ENCODE measurements at regions of chr14 and their contacts with region 1.

Region 1: DNA sequence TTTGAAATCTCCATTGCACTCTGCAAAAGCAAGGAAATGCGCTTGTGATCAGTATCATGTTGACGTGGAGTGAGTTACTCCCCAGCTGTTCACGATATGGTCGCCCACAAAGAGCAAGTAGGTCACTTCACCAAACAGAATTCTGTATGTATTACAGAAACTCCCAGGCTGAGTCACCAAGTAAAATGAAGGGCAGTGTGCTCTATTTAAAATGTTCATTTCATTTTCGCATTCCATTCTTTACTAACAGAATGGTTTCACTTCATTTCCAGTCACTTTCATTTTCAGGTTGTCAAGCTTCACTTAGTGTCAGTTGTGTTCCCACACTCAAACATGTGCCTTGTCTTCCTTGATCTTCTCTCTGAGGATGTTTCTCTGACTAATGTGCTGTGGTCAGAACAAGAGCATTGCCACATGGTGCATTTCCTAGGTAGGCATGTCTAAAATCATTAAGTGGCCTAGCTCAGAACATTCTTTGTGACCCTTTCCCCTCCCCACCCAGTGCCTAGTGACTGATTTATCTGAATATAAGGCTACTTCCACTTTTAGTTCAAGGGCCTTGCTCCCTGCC is 391.2 kb downstream of the RAD51B start:
- DNase-seq: peak; percentile 74
- H3K4me3 Mint-ChIP-seq: peak overlapping the region; percentile 11
- H3K27ac Mint-ChIP-seq: peak overlapping the region; percentile 57
- H3K4me1 Mint-ChIP-seq: peaks cover 48% of the 10 kb centered on the region
- H3K27me3 Mint-ChIP-seq: no peaks in the 10 kb centered on the region

Region 2: GRCh38 chr14:68148276-68148675 is 62.5 kb before region 1 on chr14:
- CTCF ChIA-PET with region 1: no interaction called
- intact Hi-C with region 1: loop called (anchors 2 kb)
- DNase-seq: peak; percentile 40
- H3K4me3 Mint-ChIP-seq: no peak overlapping the region
- H3K27ac Mint-ChIP-seq: no peak overlapping the region
- H3K4me1 Mint-ChIP-seq: peaks cover 16% of the 10 kb centered on the region
- H3K27me3 Mint-ChIP-seq: no peaks in the 10 kb centered on the region

Region 3: DNA sequence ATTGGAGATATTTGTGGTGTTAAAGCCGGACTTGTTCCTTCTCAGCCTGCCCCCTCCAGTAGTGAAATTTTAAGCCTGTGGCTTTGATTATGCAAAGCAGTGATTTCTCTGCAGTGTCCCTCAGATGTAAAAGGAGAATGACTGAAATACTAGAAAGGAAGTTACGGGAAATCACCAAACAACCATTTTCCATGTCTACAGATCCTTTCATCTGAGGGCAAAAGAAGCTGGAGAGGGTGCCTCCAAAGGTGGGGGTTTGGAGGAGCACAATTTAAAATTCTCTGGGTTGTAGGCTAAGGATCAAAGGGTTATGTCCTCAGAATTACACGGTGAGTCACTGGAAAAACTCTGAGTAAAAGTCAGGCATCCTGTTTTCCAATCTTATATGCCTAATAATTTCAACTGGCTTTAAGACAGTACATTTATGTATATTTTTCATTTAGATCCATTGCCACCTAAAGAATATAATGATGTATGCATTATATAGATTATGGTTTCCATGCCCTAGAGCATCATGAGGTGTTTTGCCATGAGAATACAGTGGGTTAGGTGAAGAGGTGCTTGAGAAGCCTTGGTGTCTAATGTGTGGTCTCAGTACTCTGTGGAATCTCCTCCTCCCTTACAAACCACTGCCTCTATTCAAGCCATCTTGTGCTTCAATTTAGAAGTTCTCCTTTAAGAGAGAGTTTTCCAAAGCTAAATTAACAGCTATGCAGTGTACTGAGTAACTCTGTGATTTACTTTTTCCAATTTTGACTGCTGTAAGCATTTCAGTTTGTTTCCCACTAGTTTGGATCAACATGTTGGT is 29.1 kb before region 1 on chr14:
- CTCF ChIA-PET with region 1: no interaction called
- intact Hi-C with region 1: loop called (anchors 1 kb)
- DNase-seq: no peak
- H3K4me3 Mint-ChIP-seq: no peak overlapping the region
- H3K27ac Mint-ChIP-seq: no peak overlapping the region
- H3K4me1 Mint-ChIP-seq: peaks cover 29% of the 10 kb centered on the region
- H3K27me3 Mint-ChIP-seq: no peaks in the 10 kb centered on the region

Region 4: GRCh38 chr14:68232300-68233055 is 21.7 kb after region 1 on chr14:
- CTCF ChIA-PET with region 1: interaction called, 5 read pairs
- intact Hi-C with region 1: loop called (anchors 1 kb)
- DNase-seq: peak; percentile 73
- H3K4me3 Mint-ChIP-seq: no peak overlapping the region
- H3K27ac Mint-ChIP-seq: no peak overlapping the region
- H3K4me1 Mint-ChIP-seq: peaks cover 18% of the 10 kb centered on the region
- H3K27me3 Mint-ChIP-seq: no peaks in the 10 kb centered on the region

Region 5: DNA sequence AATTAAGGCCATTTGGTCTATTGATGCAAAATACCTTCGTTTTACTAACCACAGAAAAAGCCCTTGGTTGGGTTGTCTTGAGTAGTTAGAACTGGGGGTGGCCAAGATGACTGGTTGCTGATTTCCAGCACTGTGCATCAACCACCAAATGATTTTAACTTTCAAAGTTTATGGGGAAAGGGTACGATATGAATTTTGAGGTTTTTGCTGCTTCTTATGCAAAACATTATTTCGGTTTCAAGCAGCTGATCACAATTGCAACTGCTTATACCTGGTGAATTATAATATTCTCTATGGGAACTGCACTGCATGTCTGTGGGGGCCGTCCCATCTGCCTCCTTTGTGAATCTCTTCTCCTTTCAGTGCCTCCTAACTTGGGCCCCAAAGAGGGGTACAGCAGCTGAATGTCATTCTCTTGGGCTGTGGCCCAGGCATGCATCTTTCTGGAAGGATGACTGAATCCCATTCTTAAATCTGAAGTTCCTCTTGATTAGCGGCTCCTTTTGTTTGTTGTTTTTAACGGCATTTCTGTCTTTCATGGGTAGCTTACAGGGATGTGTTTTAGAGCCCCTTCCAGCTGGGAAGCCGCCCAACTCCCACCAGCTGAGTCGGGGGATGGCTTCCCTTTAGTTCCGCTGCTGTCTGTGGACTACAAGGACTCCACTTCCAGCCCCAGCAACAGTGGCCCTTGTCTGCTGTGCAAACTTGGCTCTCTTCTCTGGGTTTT is 102.2 kb after region 1 on chr14:
- CTCF ChIA-PET with region 1: no interaction called
- intact Hi-C with region 1: loop called (anchors 1 kb)
- DNase-seq: peak; percentile 72
- H3K4me3 Mint-ChIP-seq: no peak overlapping the region
- H3K27ac Mint-ChIP-seq: no peak overlapping the region
- H3K4me1 Mint-ChIP-seq: peaks cover 26% of the 10 kb centered on the region
- H3K27me3 Mint-ChIP-seq: no peaks in the 10 kb centered on the region

Region 6: DNA sequence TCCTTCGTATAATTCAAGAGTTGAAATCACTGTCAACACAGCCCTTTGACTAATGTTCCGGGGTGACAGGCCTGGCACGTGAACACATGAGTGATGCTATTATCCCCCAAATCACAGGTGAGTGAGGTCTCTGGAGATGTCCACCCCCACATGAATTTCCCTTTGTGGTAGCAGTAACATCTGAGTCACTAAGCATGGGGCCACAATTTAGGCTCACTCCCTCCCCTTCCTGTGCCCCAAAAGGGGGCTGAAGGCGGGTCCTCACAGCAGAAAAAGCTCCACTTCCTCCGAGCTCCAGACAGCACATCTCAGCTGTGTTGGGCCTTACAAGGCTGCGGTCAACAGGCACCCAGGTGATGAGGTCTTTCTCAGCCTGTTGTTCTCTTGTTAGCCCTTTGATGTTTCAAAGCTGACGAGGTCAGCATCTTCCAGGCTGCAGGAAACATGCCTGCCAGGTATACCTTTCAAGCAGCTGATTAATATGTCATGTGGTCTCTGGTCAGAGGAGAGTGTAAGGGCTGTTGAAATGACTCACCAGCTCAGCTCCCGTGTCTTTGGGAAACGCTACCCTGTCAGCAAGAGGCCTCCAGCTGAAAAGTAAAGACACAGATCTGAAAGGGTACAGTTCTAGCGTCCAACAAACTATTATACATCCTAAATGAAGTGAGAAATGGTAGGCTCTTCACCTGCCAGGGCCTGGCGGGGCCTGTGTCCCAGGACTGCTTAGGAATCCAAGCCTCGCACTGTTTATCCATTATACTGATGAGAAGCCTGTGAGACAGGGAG is 474.8 kb after region 1 on chr14:
- CTCF ChIA-PET with region 1: no interaction called
- intact Hi-C with region 1: loop called (anchors 1 kb)
- DNase-seq: peak; percentile 90
- H3K4me3 Mint-ChIP-seq: peak overlapping the region; percentile 19
- H3K27ac Mint-ChIP-seq: peak overlapping the region; percentile 91
- H3K4me1 Mint-ChIP-seq: peaks cover 54% of the 10 kb centered on the region
- H3K27me3 Mint-ChIP-seq: no peaks in the 10 kb centered on the region

Region 7: DNA sequence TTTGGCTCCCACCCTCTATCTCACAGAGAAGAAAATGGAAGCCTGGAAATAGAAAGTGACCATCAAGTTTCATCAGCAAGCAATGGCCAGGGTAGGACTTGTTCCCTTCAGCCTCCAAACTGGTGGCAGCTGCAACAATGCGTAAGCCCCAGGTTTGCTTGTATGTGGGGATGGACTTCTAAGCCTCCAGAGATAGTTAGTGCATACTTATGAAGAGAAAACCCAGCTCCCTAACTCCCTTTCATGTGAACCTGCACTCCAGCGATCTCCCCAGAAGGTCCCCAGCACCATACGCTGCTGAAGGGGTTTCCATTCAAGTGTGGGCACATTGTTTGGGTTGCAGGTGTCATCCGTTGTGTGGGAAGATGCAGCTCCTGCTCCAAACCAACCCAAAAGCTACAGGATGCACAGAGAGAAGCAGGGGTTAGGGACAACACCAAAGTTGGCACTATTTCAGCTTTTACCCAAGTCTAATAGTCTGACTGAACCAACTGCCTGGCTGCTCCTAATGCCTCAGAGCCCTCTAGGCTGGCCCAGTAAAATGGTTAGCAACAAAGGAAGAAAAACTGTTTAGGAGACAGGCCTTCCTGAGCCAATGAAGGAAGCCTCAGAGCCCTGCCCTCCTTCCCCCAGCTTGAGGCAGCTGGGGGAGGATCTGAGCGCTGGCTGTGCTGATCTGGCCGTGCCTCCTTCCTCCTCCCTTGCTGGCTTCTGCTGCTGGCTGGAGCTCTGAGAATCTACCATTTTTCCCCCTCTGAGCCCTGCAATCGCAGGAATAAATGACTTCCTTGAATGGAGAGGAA is 569.7 kb after region 1 on chr14:
- CTCF ChIA-PET with region 1: no interaction called
- intact Hi-C with region 1: loop called (anchors 2 kb)
- DNase-seq: peak; percentile 48
- H3K4me3 Mint-ChIP-seq: peak overlapping the region; percentile 61
- H3K27ac Mint-ChIP-seq: peak overlapping the region; percentile 62
- H3K4me1 Mint-ChIP-seq: peaks cover 72% of the 10 kb centered on the region
- H3K27me3 Mint-ChIP-seq: no peaks in the 10 kb centered on the region